ENCODE measurements at regions of chr17 and their contacts with region 1.

Region 1: GRCh38 chr17:7351665-7352501 is at the start of gene KCTD11:
- DNase-seq: peak; percentile 90
- ATAC-seq: peak; percentile 46
- H3K4me3 Mint-ChIP-seq: peak within 1 kb of the TSS; percentile 87
- H3K27ac Mint-ChIP-seq: peak within 1 kb of the TSS; percentile 87
- H3K4me1 Mint-ChIP-seq: peaks cover 57% of the 10 kb centered on the region
- H3K27me3 Mint-ChIP-seq: no peaks in the 10 kb centered on the region
- CTCF ChIP-seq: no peak
- total RNA-seq, gene KCTD11: 11.0 to 11.2 TPM

Region 2: GRCh38 chr17:7261172-7261927 is 90.5 kb before region 1 on chr17:
- CTCF ChIA-PET with region 1: no interaction called
- POLR2A ChIA-PET with region 1: no interaction called
- intact Hi-C with region 1: no loop called
- DNase-seq: peak; percentile 57
- ATAC-seq: peak; percentile 64
- H3K4me3 Mint-ChIP-seq: peak overlapping the region; percentile 68
- H3K27ac Mint-ChIP-seq: peak overlapping the region; percentile 74
- H3K4me1 Mint-ChIP-seq: peaks cover 37% of the 10 kb centered on the region
- H3K27me3 Mint-ChIP-seq: peaks cover 18% of the 10 kb centered on the region
- CTCF ChIP-seq: no peak

Region 3: DNA sequence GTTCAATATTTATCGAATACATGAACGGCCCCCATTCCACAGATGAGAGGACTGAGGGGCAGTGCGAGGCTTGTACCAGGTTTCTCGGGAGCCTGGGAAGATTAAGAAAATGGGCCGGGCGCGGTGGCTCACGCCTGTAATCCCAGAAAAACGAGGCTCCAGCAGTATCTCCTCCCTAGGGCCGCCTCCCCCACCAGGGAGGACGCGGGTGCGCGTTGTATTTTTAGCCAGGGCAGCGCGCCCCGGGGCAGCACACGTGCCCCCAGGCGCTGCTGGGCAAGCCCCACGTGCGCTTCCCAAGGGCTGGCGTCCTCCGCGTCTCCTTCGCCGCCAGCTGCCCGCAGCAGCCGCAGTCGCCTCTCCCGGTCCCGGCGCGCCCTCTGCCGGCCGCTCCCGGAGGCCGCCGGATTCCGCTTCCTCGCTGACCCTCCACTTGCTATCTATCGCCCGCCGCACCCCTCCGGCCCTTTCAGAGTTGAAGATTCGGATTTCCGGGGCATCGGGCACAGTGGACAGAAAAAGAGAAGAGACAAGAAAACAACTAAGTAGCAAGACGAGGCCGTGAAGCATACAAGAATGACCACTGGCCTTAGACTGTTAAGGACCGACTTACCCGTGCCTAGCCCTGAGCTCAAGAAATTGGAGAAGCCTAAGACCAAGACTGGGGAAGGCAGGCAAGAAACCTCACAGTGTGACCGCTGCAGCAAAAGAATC is 55.5 kb before region 1 on chr17:
- CTCF ChIA-PET with region 1: interaction called, 16 read pairs
- POLR2A ChIA-PET with region 1: no interaction called
- intact Hi-C with region 1: no loop called
- DNase-seq: peak; percentile 70
- ATAC-seq: peak; percentile 35
- H3K4me3 Mint-ChIP-seq: no peak overlapping the region
- H3K27ac Mint-ChIP-seq: no peak overlapping the region
- H3K4me1 Mint-ChIP-seq: peaks cover 14% of the 10 kb centered on the region
- H3K27me3 Mint-ChIP-seq: peaks cover 23% of the 10 kb centered on the region
- CTCF ChIP-seq: peak; percentile 99

Region 4: GRCh38 chr17:7323731-7324437 is 28.0 kb before region 1 on chr17:
- CTCF ChIA-PET with region 1: interaction called, 50 read pairs
- POLR2A ChIA-PET with region 1: interaction called, 14 read pairs
- intact Hi-C with region 1: no loop called
- DNase-seq: peak; percentile 78
- ATAC-seq: peak; percentile 62
- H3K4me3 Mint-ChIP-seq: no peak overlapping the region
- H3K27ac Mint-ChIP-seq: no peak overlapping the region
- H3K4me1 Mint-ChIP-seq: peaks cover 29% of the 10 kb centered on the region
- H3K27me3 Mint-ChIP-seq: no peaks in the 10 kb centered on the region
- CTCF ChIP-seq: peak; percentile 86

Region 5: GRCh38 chr17:7336240-7337175 is 15.4 kb before region 1 on chr17 and contains the start of gene ACAP1:
- CTCF ChIA-PET with region 1: interaction called, 49 read pairs
- POLR2A ChIA-PET with region 1: interaction called, 76 read pairs
- intact Hi-C with region 1: no loop called
- DNase-seq: peak; percentile 93
- ATAC-seq: peak; percentile 94
- H3K4me3 Mint-ChIP-seq: peak within 1 kb of the TSS; percentile 89
- H3K27ac Mint-ChIP-seq: peak within 1 kb of the TSS; percentile 93
- H3K4me1 Mint-ChIP-seq: peaks cover 47% of the 10 kb centered on the region
- H3K27me3 Mint-ChIP-seq: no peaks in the 10 kb centered on the region
- CTCF ChIP-seq: no peak
- total RNA-seq, gene ACAP1: 309 to 342 TPM

Region 6: DNA sequence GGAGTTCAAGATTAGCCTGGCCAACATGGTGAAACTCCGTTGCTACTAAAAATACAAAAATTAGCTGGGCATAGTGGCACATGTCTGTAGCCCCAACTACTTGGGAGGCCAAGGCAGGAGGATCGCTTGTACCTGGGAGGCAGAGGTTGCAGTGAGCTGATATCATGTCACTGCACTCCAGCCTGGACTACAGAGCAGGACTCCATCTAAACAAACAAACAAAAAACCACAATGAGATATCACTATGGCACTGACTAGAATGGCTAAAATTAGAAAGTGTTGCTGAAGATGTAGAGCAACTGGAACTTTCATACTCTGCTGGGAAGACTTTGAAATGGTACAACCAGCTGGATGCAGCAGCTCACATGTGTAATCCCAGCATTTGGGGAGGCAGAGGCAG is 22.5 kb after region 1 on chr17:
- CTCF ChIA-PET with region 1: interaction called, 19 read pairs
- POLR2A ChIA-PET with region 1: no interaction called
- intact Hi-C with region 1: no loop called
- DNase-seq: no peak
- ATAC-seq: no peak
- H3K4me3 Mint-ChIP-seq: no peak overlapping the region
- H3K27ac Mint-ChIP-seq: no peak overlapping the region
- H3K4me1 Mint-ChIP-seq: peaks cover 2% of the 10 kb centered on the region
- H3K27me3 Mint-ChIP-seq: peaks cover 8% of the 10 kb centered on the region
- CTCF ChIP-seq: no peak

Region 7: DNA sequence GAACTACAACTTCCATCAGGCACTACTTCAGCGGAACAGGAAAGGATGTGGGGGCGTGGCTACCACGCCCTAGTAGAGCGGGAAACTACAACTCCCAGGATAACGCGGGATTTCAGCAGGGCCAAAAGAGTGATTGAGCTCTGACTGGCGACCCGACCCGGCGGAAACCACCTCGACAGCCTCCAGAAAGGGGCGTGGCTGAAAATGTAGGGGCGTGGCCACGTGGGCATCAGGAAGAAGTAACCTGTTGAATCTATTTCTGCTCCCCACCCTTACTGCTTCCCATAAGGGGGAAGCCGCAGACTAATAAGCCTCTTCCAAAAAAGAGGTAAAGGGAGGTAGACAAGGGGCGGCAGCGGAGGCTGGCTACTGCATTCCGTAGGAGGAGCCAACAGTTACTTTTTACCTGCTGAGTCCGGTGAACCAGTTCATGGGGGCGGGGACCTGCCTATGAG is 83.4 kb after region 1 on chr17 and contains the start of gene TMEM102:
- CTCF ChIA-PET with region 1: interaction called, 68 read pairs
- POLR2A ChIA-PET with region 1: interaction called, 6 read pairs
- intact Hi-C with region 1: loop called (anchors 5 kb)
- DNase-seq: peak; percentile 99
- ATAC-seq: peak; percentile 82
- H3K4me3 Mint-ChIP-seq: peak within 1 kb of the TSS; percentile 94
- H3K27ac Mint-ChIP-seq: peak within 1 kb of the TSS; percentile 97
- H3K4me1 Mint-ChIP-seq: peaks cover 23% of the 10 kb centered on the region
- H3K27me3 Mint-ChIP-seq: peaks cover 12% of the 10 kb centered on the region
- CTCF ChIP-seq: no peak
- total RNA-seq, gene TMEM102: 12.5 to 14.2 TPM

Region 8: DNA sequence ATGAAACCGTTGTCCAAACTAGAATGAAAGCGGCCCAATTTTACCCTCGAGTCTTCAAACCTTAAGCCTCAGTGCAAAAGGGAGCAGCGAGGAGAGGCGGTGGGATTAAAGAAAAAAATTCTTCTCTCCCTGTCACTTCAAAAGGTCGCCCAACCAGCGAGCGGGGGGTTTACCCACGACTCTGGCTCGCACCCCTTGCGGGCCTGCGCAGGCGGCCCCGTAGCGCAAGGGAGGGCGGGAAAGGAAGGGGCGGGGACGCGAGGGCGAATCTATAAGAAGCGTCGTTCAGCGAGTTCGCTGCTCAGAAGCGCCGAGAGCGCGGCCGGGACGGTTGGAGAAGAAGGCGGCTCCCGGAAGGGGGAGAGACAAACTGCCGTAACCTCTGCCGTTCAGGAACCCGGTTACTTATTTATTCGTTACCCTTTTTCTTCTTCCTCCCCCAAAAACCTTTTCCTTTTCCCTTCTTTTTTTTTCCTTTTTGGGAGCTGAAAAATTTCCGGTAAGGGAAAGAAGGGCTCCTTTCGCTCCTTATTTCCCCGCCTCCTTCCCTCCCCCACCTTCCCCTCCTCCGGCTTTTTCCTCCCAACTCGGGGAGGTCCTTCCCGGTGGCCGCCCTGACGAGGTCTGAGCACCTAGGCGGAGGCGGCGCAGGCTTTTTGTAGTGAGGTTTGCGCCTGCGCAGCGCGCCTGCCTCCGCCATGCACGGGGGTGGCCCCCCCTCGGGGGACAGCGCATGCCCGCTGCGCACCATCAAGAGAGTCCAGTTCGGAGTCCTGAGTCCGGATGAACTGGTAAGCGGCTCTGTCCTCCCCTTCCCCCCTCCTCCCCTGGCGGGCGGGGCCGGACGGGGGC is 132.4 kb after region 1 on chr17 and contains the start of gene POLR2A:
- CTCF ChIA-PET with region 1: interaction called, 4 read pairs
- POLR2A ChIA-PET with region 1: interaction called, 7 read pairs
- intact Hi-C with region 1: loop called (anchors 10 kb)
- DNase-seq: peak; percentile 96
- ATAC-seq: peak; percentile 67
- H3K4me3 Mint-ChIP-seq: peak within 1 kb of the TSS; percentile 96
- H3K27ac Mint-ChIP-seq: peak within 1 kb of the TSS; percentile 99
- H3K4me1 Mint-ChIP-seq: peaks cover 63% of the 10 kb centered on the region
- H3K27me3 Mint-ChIP-seq: no peaks in the 10 kb centered on the region
- CTCF ChIP-seq: no peak
- total RNA-seq, gene POLR2A: 219 to 223 TPM

Measured in activated CD8-positive, alpha-beta T cell treated with anti-CD3 and anti-CD28 coated beads for 36 hours (primary cell).